ENCODE measurements at regions of chr5 and their contacts with region 1.

Region 1: GRCh38 chr5:34007621-34008600 is at the start of gene AMACR:
- DNase-seq: peak; percentile 91
- H3K4me3 Mint-ChIP-seq: peak within 1 kb of the TSS; percentile 91
- H3K27ac Mint-ChIP-seq: peak within 1 kb of the TSS; percentile 93
- H3K4me1 Mint-ChIP-seq: peaks cover 32% of the 10 kb centered on the region
- H3K27me3 Mint-ChIP-seq: no peaks in the 10 kb centered on the region
- total RNA-seq, gene AMACR: 11.5 TPM

Region 2: DNA sequence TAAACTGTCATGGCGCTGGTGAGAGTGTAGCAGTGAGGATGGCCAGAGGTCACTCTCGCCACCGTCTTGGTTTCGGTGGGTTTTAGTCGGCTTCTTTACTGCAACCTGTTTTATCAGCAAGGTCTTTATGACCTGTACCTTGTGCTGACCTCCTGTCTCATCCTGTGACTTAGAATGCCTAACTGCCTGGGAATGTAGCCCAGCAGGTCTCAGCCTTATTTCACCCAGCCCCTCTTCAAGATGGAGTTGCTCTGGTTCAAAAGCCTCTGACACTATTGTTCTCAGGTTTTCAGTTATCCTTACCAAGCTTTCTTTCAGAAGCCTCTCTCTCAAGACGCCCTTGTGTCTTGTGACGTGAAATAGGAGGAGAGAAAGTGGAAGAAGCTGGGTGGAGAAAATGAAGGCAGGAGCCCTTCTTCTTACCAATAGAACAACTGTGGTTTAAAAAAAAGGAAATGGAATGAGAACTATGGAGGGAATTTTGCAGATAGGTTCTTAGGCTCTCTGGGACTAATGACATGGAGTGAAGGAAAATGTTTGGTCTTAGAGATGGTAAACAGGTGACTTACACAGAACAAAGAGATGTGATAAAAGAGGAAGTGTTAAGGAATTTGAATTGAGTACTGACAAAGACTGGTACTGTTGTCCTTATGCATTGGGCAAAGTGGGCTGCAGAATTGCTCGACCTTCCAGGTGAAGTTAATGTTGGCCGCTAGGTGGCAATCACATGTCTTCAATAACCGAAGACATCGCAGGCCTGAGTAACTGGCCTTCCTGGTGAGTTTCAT is 514.9 kb after region 1 on chr5:
- CTCF ChIA-PET with region 1: no interaction called
- POLR2A ChIA-PET with region 1: no interaction called
- intact Hi-C with region 1: no loop called
- DNase-seq: peak; percentile 60
- H3K4me3 Mint-ChIP-seq: no peak overlapping the region
- H3K27ac Mint-ChIP-seq: no peak overlapping the region
- H3K4me1 Mint-ChIP-seq: peaks cover 4% of the 10 kb centered on the region
- H3K27me3 Mint-ChIP-seq: peaks cover 4% of the 10 kb centered on the region

Region 3: DNA sequence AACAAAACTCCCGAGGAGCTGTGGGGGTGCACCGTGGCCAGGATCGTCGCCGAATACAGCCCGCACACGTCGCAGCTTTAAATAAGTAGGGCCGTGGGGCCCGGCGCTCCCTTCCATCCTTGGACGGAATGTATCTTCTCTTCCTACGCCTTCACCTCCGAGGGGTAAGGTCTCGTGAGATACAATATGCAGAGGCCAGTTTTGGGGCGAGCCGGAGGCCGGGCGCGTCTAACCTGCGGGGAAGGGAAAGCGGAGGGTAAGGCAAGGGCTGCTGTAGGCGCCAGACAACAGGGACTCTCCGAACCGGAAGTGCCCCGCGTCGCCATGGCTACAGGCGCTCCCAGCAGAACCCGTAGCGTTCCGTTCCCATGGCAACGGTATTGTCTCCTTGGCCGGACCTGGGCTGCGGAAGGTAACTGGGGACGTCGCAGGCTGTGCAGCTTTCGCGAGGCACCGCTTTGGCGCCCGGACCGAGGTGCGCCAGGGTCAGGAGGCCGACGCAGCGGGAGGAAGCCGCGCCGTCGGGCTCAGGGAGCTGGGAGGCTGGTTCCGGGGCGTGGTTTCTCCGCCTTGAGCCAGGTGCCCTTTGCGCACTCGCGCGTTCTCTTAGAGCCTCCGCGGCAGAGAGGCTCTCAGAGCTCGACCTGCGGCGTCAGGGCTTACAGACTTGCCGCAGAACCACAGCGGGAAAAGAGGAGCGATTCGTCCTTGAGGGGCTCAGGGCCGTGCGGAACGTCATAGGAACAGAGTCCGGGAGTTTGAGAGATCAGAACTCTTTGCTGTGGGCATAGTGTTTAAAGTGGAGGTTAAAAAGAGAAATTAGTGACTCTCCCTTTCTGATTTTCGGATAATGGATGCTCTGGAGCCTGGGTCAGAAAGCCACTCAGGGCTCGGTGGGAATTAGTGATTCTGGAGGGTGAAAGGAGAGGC is 831.1 kb after region 1 on chr5 and contains the start of gene TTC23L:
- CTCF ChIA-PET with region 1: no interaction called
- POLR2A ChIA-PET with region 1: no interaction called
- intact Hi-C with region 1: loop called (anchors 1 kb)
- DNase-seq: peak; percentile 93
- H3K4me3 Mint-ChIP-seq: peak within 1 kb of the TSS; percentile 90
- H3K27ac Mint-ChIP-seq: peak within 1 kb of the TSS; percentile 68
- H3K4me1 Mint-ChIP-seq: peaks cover 9% of the 10 kb centered on the region
- H3K27me3 Mint-ChIP-seq: no peaks in the 10 kb centered on the region
- total RNA-seq, gene TTC23L: 0.07 TPM in 1 of 2 experiments, not detected in the other

Region 4: DNA sequence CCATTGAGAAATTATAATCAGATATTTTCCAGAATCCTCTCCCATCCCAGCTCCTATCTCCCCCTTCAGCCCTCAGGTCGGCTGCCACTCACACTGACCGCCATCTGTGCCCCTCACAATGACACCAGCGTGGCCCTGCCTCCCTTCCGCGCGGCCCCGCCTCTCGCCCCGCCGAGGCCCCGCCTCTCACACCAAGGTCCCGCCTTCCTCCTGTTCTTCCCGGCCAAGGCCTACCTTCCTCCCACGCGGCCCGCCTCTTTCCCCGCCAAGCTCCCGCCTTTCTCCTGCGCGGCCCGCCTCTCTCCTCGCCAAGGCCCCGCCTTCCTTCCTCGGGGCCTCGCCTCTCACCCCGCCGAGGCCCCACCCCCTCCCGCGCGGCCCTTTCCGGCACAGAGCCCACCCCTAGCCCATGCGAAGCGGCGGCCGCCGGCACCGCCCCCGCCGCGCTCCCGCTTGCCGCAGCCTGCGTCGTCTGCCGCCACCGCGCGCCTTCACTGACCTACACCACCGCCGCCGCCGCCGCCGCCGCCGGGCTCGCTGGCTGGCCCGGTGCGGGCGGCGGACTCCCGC is 921.3 kb after region 1 on chr5 and contains the start of gene DNAJC21:
- CTCF ChIA-PET with region 1: no interaction called
- POLR2A ChIA-PET with region 1: no interaction called
- intact Hi-C with region 1: loop called (anchors 5 kb)
- DNase-seq: peak; percentile 99
- H3K4me3 Mint-ChIP-seq: peak within 1 kb of the TSS; percentile 97
- H3K27ac Mint-ChIP-seq: peak within 1 kb of the TSS; percentile 93
- H3K4me1 Mint-ChIP-seq: peaks cover 35% of the 10 kb centered on the region
- H3K27me3 Mint-ChIP-seq: no peaks in the 10 kb centered on the region
- total RNA-seq, gene DNAJC21: 60.3 to 62.3 TPM